IMR-90 (cell line): ENCODE measurements at regions of chr12 and their contacts with region 1.

Region 1: GRCh38 chr12:8890313-8891085 is 23.8 kb upstream of the PHC1 start:
- DNase-seq: peak; percentile 22
- ATAC-seq: peak; percentile 95
- H3K4me3 ChIP-seq: peak overlapping the region; percentile 63
- H3K27ac ChIP-seq: no peak overlapping the region
- H3K4me1 ChIP-seq: no peaks in the 10 kb centered on the region
- H3K27me3 ChIP-seq: peaks cover 2% of the 10 kb centered on the region
- CTCF ChIP-seq: peak; percentile 73
- POLR2A ChIP-seq: no peak
- RAD21 ChIP-seq: peak; percentile 65

Region 2: DNA sequence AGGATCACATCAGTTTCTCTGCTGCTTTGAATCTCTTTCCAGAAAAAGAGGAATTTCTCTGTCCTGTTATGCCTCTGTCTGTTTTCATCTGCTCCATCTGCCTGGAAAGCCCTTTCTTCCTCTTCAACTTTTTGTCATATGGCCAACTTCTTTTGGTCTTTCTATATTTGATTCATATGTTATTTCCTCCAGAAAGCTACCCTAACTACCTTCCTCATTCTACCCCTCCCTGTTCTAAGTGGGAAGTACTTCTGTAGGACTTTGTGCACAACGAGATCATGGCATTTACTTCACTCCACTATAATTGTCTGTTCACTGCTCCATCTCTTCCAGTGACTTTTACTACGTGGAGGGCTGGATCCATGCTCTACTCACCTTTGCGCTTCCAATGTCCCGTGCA is 371.3 kb before region 1 on chr12:
- CTCF ChIA-PET with region 1: no interaction called
- POLR2A ChIA-PET with region 1: no interaction called
- dilution Hi-C with region 1: no loop called
- in situ Hi-C with region 1: no loop called
- intact Hi-C with region 1: no loop called
- DNase-seq: no peak
- ATAC-seq: no peak
- H3K4me3 ChIP-seq: no peak overlapping the region
- H3K27ac ChIP-seq: no peak overlapping the region
- H3K4me1 ChIP-seq: no peaks in the 10 kb centered on the region
- H3K27me3 ChIP-seq: no peaks in the 10 kb centered on the region
- CTCF ChIP-seq: no peak
- POLR2A ChIP-seq: no peak
- RAD21 ChIP-seq: no peak

Region 3: GRCh38 chr12:8544295-8544694 is 346.2 kb before region 1 on chr12:
- CTCF ChIA-PET with region 1: interaction called, 7 read pairs
- POLR2A ChIA-PET with region 1: no interaction called
- dilution Hi-C with region 1: no loop called
- in situ Hi-C with region 1: no loop called
- intact Hi-C with region 1: loop called (anchors 10 kb)
- DNase-seq: peak; percentile 59
- ATAC-seq: peak; percentile 86
- H3K4me3 ChIP-seq: no peak overlapping the region
- H3K27ac ChIP-seq: no peak overlapping the region
- H3K4me1 ChIP-seq: no peaks in the 10 kb centered on the region
- H3K27me3 ChIP-seq: no peaks in the 10 kb centered on the region
- CTCF ChIP-seq: peak; percentile 81
- POLR2A ChIP-seq: no peak
- RAD21 ChIP-seq: peak; percentile 54

Region 4: DNA sequence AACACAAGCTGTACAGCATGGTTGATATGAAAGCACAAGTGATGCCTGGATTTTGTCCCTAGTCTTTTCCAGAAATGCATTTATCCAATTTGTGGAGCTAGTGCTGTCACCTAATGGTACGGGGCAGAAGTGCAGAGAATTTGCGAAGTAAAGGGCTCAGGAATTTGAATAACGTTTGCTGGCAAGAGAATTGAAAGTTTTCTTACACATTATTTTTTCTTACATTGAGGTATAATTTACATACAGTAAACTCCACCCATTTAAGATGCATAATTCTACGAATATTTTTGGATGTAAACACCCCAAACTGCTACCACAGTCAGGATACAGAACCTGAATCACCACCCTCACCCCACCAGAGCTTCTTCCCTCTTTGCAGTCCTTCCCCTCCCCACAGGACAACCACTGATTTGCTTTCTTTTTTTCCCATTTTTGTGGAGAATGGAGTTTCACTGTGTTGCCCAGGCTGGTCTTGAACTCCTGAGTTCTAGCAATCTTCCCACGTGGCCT is 281.4 kb before region 1 on chr12:
- CTCF ChIA-PET with region 1: no interaction called
- POLR2A ChIA-PET with region 1: no interaction called
- dilution Hi-C with region 1: no loop called
- in situ Hi-C with region 1: no loop called
- intact Hi-C with region 1: no loop called
- DNase-seq: peak; percentile 47
- ATAC-seq: peak; percentile 82
- H3K4me3 ChIP-seq: no peak overlapping the region
- H3K27ac ChIP-seq: no peak overlapping the region
- H3K4me1 ChIP-seq: no peaks in the 10 kb centered on the region
- H3K27me3 ChIP-seq: no peaks in the 10 kb centered on the region
- CTCF ChIP-seq: peak; percentile 58
- POLR2A ChIP-seq: no peak
- RAD21 ChIP-seq: peak; percentile 35; the same call in 1 of the 2 replicates

Region 5: DNA sequence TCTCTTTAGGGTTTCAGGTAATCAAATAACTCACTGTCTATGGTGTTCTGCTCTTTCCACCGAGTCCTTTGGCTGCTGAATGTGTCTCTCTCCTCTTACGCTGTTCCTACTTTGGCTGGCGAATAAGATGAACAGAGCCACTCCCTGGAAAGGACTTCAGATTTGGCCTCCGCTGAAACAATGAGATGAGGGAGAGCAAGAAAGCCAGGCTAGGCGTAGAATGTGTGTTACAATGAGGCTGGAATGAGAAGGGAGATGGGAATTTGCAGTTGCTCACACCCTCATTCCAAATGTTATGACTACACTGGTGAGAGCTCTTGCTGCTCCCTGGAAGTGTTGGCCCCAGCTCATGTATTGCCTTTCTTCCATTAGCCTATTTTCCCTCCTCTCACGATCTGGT is 227.9 kb before region 1 on chr12 and contains the start of gene MFAP5:
- CTCF ChIA-PET with region 1: interaction called, 12 read pairs
- POLR2A ChIA-PET with region 1: no interaction called
- dilution Hi-C with region 1: no loop called
- in situ Hi-C with region 1: no loop called
- intact Hi-C with region 1: loop called (anchors 1 kb)
- DNase-seq: peak; percentile 25
- ATAC-seq: no peak
- H3K4me3 ChIP-seq: no peak within 1 kb of the TSS
- H3K27ac ChIP-seq: no peak within 1 kb of the TSS
- H3K4me1 ChIP-seq: no peaks in the 10 kb centered on the region
- H3K27me3 ChIP-seq: peaks cover 12% of the 10 kb centered on the region
- CTCF ChIP-seq: no peak
- POLR2A ChIP-seq: no peak
- RAD21 ChIP-seq: no peak
- total RNA-seq, gene MFAP5: 0.56 and 0.90 TPM in 2 replicates

Region 6: DNA sequence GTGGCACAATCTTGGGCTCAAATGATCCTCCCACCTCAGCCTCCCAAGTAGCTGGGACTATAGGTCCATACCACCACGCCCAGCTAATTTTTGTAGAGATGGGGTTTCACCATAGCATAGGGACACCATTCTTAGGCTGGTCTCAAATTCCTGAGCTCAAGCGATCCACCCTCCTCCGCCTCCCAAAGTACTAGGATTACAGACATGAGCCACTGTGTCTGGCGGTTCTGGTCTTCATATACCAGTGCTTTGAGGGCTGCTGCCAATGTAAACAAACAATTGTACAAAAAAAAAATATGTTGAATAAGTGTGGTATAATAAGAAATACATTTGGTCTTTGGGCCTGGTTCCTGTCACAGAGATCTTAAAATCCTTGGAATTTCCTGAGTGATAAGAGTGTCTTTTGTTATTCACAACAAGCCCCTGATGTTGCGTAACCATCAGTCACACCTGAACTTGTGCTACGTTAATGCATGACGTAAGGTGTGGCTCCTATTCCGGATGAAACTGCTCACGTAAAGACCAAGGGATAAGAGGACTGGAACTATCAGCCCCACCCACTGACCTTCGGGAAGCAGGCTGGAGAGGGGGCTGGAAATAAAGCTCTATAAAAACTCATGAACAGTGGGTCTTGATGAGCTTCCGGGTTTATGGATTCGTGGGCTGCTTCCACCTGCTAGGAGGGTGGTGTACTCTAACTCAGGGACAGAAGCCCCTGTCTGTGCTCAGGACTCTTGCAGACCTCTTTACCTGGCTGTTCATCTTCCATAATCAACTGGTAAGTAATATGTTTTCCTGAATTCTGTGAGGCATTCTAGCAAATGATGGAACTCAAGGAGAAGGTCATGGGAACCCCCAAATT is 209.2 kb before region 1 on chr12:
- CTCF ChIA-PET with region 1: interaction called, 9 read pairs
- POLR2A ChIA-PET with region 1: no interaction called
- dilution Hi-C with region 1: no loop called
- in situ Hi-C with region 1: loop called (anchors 5 kb)
- intact Hi-C with region 1: loop called (anchors 1 kb)
- DNase-seq: peak; percentile 43
- ATAC-seq: peak; percentile 32; the same call in 1 of the 2 replicates
- H3K4me3 ChIP-seq: no peak overlapping the region
- H3K27ac ChIP-seq: no peak overlapping the region
- H3K4me1 ChIP-seq: no peaks in the 10 kb centered on the region
- H3K27me3 ChIP-seq: no peaks in the 10 kb centered on the region; the same call in 1 of the 2 replicates
- CTCF ChIP-seq: no peak
- POLR2A ChIP-seq: no peak
- RAD21 ChIP-seq: no peak

Region 7: DNA sequence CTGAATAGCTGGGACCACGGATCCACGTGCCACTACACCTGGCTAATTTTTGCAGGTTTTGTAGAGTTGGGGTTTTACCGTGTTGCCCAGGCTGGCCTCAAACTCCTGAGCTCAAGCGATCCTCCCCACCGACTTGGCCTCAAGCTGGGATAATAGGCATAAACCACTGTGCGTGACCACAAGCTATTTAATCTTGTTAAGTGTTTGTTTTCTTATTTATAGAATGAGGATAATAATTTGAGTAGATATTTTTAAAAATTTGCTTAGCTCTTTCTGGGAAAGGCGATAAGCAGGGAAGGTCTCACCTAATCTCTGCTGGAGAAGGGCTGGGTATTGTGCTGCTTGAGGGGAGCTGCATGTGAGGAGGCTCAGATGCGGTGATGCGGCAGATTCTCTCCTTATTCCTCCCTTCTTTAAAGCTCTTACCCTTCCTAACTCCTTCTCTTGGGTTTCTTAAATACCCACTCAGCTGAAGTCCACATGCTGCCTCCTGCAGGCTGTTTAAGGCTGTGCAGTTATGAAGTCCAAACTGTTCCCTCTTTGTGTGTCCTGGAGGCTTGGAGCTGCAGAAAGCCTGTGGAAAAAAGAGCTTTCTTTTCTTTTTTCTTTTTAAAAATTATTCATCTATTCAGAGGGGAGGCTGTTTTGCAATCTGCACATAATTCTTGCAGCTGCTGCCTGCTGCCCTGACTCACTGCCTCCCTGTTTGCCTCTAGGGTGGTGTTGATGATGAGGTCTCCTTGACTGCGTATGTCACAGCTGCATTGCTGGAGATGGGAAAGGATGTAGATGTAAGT is 30.1 kb before region 1 on chr12:
- CTCF ChIA-PET with region 1: interaction called, 10 read pairs
- POLR2A ChIA-PET with region 1: no interaction called
- dilution Hi-C with region 1: no loop called
- in situ Hi-C with region 1: no loop called
- intact Hi-C with region 1: no loop called
- DNase-seq: peak; percentile 54
- ATAC-seq: peak; percentile 87
- H3K4me3 ChIP-seq: no peak overlapping the region
- H3K27ac ChIP-seq: no peak overlapping the region
- H3K4me1 ChIP-seq: no peaks in the 10 kb centered on the region
- H3K27me3 ChIP-seq: no peaks in the 10 kb centered on the region
- CTCF ChIP-seq: peak; percentile 51
- POLR2A ChIP-seq: no peak
- RAD21 ChIP-seq: peak; percentile 50

Region 8: GRCh38 chr12:9114946-9115345 is 224.4 kb after region 1 on chr12:
- CTCF ChIA-PET with region 1: no interaction called
- POLR2A ChIA-PET with region 1: no interaction called
- dilution Hi-C with region 1: no loop called
- in situ Hi-C with region 1: no loop called
- intact Hi-C with region 1: no loop called
- DNase-seq: no peak
- ATAC-seq: no peak
- H3K4me3 ChIP-seq: peak overlapping the region; percentile 25; the same call in 1 of the 2 replicates
- H3K27ac ChIP-seq: no peak overlapping the region
- H3K4me1 ChIP-seq: peaks cover 2% of the 10 kb centered on the region; the same call in 1 of the 2 replicates
- H3K27me3 ChIP-seq: no peaks in the 10 kb centered on the region
- CTCF ChIP-seq: no peak
- POLR2A ChIP-seq: no peak
- RAD21 ChIP-seq: no peak